BJ (cell line): ENCODE measurements at regions of chr1 and their contacts with region 1.

Region 1: DNA sequence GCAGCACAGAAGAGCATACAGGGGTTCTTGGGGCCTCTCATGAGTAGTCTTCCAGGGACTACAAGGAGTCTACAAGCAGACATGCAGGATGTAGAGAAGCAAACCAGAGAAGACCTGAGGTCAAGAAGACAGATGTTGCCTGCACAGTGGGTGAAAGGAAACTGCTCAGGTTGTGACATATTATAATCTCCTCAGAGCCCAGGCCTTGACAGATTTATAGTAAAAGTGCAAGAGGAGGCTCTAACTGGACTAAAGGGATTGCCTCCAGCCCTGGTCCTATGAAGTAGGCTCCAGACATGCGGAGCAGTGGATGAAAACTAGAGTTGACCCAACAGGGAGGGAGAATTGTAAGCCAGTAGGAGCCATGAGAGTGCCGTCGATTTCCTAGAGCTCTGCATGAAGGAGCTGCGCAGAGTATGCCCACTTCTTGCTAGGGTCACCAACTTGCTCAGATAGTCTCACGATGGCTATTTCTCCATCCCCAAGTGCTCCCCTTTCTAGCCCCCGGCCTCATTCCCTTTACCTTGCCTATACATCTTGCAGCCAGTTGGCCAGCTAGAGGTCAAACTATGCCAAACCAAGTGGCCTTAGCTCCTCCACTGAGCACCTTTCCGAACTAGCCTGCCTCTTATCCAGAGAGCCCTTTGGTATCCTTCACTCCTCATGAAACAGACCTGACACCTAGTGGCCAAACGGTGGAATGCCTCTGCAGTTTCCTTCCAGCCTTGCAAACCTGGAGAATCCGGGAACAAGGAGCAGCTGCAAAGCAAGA is 36.2 kb upstream of the IPO9 start:
- DNase-seq: peak; percentile 29
- H3K4me3 ChIP-seq: no peak overlapping the region
- H3K27me3 ChIP-seq: no peaks in the 10 kb centered on the region
- CTCF ChIP-seq: peak; percentile 97

Region 2: GRCh38 chr1:201559679-201560162 is 233.0 kb before region 1 on chr1:
- CTCF ChIA-PET with region 1: interaction called, 109 read pairs
- POLR2A ChIA-PET with region 1: no interaction called
- DNase-seq: no peak
- H3K4me3 ChIP-seq: no peak overlapping the region
- H3K27me3 ChIP-seq: no peaks in the 10 kb centered on the region
- CTCF ChIP-seq: peak; percentile 91

Region 3: DNA sequence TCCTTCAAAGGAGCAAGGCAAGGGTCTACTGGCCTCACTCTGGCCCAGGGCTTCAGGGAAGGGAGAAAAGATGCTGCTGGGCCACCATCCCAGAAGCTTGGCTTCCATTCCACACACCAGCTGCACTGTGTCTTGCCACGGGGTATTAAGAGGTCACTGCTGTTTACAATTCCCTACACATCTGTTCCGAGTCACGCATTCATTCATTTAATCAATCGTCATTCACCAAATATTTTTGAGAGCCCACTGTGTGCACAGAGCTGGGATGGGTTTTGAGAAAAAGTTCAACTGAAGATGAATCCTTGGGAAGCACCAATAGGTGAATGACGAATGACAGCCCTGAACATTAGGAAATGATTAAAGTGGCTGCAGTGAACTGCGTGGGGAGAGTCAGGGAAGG is 152.1 kb before region 1 on chr1:
- CTCF ChIA-PET with region 1: no interaction called
- POLR2A ChIA-PET with region 1: interaction called, 12 read pairs
- DNase-seq: peak; percentile 50
- H3K4me3 ChIP-seq: no peak overlapping the region
- H3K27me3 ChIP-seq: no peaks in the 10 kb centered on the region
- CTCF ChIP-seq: no peak

Region 4: DNA sequence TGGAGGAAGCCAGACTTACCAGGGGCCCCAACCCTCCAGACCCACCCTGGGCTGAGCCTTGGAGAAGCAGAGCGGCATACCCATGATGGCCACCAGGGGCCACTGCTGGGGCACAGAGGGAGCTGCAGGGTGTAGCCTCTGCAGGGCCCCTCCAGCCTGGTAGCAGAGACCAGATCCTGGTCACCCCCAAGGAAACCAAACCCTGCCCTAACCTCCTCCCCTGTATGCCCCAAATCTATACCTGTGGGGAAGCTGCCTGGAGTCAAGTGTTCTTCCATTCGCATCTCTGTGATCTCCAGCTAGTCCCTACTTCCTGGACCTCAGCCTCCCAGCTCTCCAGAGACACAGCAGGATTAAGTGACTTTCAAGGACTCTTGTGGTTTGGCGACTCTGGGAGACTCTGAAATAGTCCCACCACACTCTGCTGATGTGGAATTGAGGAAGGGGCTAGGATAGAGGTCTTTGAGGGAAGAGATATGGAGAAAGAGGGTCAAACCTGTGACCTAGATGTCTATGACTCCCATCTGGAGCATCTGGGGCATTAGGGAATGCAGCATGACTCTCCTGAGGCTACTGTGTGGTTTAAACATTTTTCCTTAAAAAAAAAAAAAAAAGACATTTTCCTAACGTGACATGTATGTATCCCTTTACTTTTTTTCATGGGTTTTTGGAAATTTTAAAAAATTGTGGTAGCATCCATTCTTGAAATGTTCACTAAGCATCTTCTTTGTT is 83.0 kb before region 1 on chr1:
- CTCF ChIA-PET with region 1: interaction called, 495 read pairs
- POLR2A ChIA-PET with region 1: no interaction called
- DNase-seq: no peak
- H3K4me3 ChIP-seq: no peak overlapping the region
- H3K27me3 ChIP-seq: no peaks in the 10 kb centered on the region
- CTCF ChIP-seq: peak; percentile 96

Region 5: GRCh38 chr1:201739492-201740085 is 53.1 kb before region 1 on chr1:
- CTCF ChIA-PET with region 1: interaction called, 64 read pairs
- POLR2A ChIA-PET with region 1: no interaction called
- DNase-seq: no peak
- H3K4me3 ChIP-seq: peak overlapping the region; percentile 60
- H3K27me3 ChIP-seq: no peaks in the 10 kb centered on the region
- CTCF ChIP-seq: 0 out of 2 replicates have a peak, but pooled peaks have one; percentile 2

Region 6: DNA sequence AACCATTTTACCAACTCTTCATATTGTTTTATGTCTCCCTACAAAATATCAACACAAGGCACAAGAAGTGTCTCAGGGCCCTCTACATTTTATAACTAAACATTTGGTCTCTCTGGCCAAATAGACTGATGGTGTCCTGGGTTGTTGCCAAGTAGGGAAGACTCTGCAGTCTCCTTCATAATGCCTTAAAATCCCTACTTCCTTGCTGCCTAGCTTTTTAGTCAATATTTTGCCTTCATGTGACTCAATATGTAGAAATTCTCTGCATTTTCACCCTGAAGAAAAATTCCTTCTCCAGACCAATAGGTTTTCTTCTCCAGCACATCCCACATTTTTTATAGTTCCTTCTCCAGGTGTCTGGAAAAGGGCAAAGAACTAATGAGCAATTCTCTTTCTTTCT is 36.3 kb before region 1 on chr1:
- CTCF ChIA-PET with region 1: interaction called, 13 read pairs
- POLR2A ChIA-PET with region 1: no interaction called
- DNase-seq: peak; percentile 74
- H3K4me3 ChIP-seq: no peak overlapping the region
- H3K27me3 ChIP-seq: no peaks in the 10 kb centered on the region
- CTCF ChIP-seq: no peak

Region 7: DNA sequence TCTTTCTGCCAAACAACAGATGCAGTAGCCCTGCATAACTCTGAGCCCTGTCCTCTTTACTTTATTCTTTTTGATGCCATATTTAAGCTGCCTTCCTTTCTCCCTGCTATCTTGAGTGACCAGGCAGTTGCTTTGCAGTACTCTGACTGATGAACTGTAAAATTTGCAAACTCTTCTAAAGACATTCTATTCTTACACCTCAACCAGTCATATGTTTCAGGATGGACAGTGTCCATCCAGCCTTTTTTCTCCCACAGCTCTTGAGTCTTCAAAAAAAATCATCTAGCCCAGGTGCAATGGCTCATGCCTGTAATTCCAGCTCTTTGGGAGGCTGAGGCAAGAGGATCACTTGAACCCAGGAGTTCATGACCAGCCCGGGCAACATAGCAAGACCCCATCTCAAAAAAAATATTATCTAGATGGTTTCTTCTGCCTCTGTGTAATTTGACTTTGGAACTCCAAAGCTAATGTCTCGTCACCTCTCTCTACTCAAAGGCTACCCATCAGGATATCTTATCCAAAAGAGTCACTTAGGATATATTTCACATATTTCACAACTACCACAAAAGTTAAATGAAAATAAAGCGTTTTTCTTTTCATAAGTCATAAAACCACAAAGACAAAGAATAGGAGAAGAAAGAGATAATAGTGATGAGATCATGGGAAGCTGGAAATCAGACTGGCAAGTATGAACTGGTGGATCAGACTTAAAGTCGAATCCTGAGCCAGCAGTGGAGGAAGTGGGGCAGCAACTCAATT is 18.3 kb before region 1 on chr1:
- CTCF ChIA-PET with region 1: interaction called, 21 read pairs
- POLR2A ChIA-PET with region 1: no interaction called
- DNase-seq: no peak
- H3K4me3 ChIP-seq: no peak overlapping the region
- H3K27me3 ChIP-seq: no peaks in the 10 kb centered on the region
- CTCF ChIP-seq: no peak